Activated B cell treated with CpG ODN at 0.5 μM for 24 hours (primary cell): ENCODE measurements at regions of chr2 and their contacts with region 1.

Region 1: DNA sequence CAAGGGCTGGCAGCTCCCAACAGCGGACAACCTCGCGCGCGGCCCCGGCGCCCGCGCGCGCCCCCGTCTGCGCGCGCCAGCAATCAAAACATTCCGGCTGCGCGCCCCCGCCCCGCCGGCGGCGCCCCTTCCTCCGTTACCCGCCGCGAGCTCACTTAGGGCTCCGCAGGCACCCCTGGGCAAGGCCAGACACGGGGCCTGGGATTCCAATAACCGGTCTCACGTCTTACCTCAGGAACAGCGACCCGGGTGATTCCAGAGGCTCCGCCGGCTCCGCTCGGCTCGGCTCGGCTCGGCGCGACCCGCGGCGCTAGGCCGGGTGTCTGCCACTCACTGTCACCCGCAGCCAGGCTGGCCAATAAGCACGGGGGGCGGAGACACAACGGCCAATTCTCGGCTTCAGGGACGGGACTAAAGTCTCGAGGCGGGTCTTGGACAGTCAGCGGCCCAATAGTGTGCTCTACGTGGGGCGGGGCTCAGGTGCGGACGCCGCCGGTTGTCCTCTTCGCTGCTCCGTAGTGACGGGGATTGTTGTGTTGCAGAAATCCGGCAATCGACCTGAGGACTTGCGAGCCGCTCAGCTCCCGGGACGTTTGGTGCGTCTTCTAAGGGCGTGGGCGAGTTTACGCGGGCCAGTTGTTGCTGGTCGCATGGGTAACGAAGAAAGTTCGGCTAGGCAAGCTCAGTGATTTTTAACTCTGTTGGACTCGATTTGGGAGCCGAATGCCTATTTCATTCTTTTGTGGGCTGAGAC is at the starts of genes ANKZF1 and ATG9A:
- DNase-seq: peak; percentile 90
- ATAC-seq: peak; percentile 97
- H3K4me3 Mint-ChIP-seq: peak within 1 kb of the TSS; percentile 96
- H3K27ac Mint-ChIP-seq: peak within 1 kb of the TSS; percentile 95
- H3K4me1 Mint-ChIP-seq: peaks cover 43% of the 10 kb centered on the region
- H3K27me3 Mint-ChIP-seq: no peaks in the 10 kb centered on the region
- CTCF ChIP-seq: no peak
- total RNA-seq, gene ANKZF1: 96.0 and 105 TPM in 2 replicates
- total RNA-seq, gene ATG9A: 28.3 and 38.3 TPM in 2 replicates

Region 2: DNA sequence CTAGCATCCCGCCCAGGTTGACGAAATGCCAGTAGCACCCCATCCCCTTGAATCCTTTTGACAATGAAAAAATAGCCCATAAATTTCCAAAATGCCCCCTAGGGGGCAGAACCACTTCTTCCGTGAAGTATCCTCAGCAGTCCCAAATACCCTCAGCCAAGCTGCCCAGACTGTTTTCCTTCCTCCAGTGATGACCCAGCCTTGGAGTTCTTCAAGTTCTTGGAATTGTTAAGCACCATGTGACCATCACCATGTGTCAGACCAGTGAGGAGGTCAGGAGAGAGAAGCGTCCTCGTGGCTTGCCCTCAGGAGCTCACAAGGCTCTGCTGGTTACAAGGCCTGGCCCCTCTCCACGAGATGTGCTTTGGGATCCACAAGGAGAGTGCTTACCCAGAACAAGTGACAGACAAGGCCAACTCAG is 58.2 kb before region 1 on chr2:
- CTCF ChIA-PET with region 1: interaction called, 3 read pairs
- POLR2A ChIA-PET with region 1: interaction called, 32 read pairs
- intact Hi-C with region 1: no loop called
- DNase-seq: no peak
- ATAC-seq: peak; percentile 40
- H3K4me3 Mint-ChIP-seq: no peak overlapping the region
- H3K27ac Mint-ChIP-seq: no peak overlapping the region
- H3K4me1 Mint-ChIP-seq: peaks cover 21% of the 10 kb centered on the region
- H3K27me3 Mint-ChIP-seq: no peaks in the 10 kb centered on the region
- CTCF ChIP-seq: no peak

Region 3: DNA sequence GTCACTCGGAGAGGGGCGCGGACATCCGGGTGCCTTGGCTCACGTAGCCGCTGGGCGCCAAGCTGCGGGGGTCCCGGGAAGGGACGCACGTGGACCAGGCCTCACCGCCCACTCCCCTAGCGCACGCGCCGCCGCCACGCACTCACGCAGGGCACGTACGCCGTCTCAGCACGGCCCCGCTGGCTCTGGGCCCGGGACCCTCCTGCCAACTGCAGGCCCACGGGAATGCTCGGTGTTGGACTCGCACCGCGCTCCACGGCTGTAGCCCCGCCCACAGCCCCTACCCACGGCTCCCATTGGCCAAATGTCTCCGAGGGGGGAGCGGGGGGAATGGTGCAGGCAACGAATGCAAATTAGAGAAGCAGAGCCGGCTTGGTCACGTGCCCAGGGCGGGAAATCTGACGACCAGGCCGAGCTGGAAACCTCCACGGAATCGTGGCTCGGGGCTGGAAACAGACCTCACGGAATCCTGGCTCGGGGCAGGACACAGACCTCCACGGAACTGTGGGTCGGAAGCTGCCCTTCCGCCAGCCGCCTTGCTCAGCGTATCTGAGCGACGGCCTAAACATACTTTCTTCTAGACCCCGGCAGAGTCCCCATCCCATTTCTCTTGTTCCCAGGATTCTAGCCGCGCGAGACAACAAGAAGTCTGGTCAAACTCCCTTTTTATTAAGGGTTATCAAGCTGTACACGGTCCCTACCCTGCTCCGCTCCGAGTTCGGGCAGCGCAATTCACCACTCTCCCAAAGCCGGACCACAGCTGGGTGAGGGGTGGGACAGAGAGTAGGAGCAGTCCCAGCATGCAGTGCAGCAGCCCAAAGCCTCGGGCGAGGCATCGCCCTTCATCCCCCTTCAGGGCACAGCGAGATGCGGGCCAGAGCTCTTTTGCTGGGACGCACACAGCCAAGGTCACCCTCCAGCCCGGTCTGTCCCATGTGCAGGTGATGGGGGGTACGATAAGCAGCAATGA is 10.5 kb before region 1 on chr2 and contains the start of gene ABCB6:
- CTCF ChIA-PET with region 1: no interaction called
- POLR2A ChIA-PET with region 1: interaction called, 44 read pairs
- intact Hi-C with region 1: loop called (anchors 1 kb)
- DNase-seq: peak; percentile 82
- ATAC-seq: peak; percentile 95
- H3K4me3 Mint-ChIP-seq: peak within 1 kb of the TSS; percentile 81
- H3K27ac Mint-ChIP-seq: peak within 1 kb of the TSS; percentile 74
- H3K4me1 Mint-ChIP-seq: peaks cover 19% of the 10 kb centered on the region
- H3K27me3 Mint-ChIP-seq: no peaks in the 10 kb centered on the region
- CTCF ChIP-seq: no peak
- total RNA-seq, gene ABCB6: 12.1 and 16.6 TPM in 2 replicates

Region 4: DNA sequence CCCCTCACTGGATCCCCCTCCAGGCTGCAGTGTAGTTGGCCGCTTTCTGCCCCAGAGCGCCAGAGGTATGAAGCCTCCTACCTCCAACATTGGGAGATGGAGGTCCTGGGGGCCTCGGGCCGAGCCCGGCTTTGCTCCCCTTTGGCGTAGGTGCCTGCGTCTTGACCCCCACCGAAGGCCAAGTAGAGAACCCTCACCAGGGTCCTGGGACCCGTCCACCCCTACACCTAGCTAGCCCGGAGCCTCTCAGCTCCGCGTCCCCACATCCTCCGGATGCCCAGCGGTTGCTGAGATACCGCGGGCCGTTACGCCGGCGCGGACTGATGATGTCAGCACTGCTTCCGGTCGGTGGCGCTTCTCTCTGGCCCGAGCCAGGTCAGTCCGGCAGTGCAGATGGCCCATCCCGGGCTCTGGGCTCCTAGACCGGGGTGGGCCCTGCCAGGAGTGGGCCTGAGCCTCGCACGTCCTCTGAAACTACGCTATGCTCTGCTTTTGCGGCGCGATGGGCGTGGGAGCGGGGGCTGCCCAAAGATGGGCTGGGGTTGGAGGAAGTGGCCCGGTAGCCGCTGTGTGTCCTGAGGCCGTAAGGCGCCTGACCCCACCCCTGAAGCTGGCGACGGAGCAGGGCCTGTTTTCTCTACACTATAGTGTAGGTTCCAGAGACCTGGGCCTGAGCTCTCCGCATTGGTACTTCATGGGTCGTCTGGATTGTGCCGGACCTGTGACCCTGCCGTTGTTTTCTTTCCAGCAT is 15.8 kb after region 1 on chr2 and contains the starts of genes GLB1L and STK16:
- CTCF ChIA-PET with region 1: interaction called, 4 read pairs
- POLR2A ChIA-PET with region 1: interaction called, 287 read pairs
- intact Hi-C with region 1: loop called (anchors 1 kb)
- DNase-seq: peak; percentile 95
- ATAC-seq: peak; percentile 64
- H3K4me3 Mint-ChIP-seq: peak within 1 kb of the TSS; percentile 90
- H3K27ac Mint-ChIP-seq: peak within 1 kb of the TSS; percentile 98
- H3K4me1 Mint-ChIP-seq: peaks cover 57% of the 10 kb centered on the region
- H3K27me3 Mint-ChIP-seq: no peaks in the 10 kb centered on the region
- CTCF ChIP-seq: no peak
- total RNA-seq, gene GLB1L: 4.5 and 4.6 TPM in 2 replicates
- total RNA-seq, gene STK16: 31.0 and 36.5 TPM in 2 replicates

Region 5: DNA sequence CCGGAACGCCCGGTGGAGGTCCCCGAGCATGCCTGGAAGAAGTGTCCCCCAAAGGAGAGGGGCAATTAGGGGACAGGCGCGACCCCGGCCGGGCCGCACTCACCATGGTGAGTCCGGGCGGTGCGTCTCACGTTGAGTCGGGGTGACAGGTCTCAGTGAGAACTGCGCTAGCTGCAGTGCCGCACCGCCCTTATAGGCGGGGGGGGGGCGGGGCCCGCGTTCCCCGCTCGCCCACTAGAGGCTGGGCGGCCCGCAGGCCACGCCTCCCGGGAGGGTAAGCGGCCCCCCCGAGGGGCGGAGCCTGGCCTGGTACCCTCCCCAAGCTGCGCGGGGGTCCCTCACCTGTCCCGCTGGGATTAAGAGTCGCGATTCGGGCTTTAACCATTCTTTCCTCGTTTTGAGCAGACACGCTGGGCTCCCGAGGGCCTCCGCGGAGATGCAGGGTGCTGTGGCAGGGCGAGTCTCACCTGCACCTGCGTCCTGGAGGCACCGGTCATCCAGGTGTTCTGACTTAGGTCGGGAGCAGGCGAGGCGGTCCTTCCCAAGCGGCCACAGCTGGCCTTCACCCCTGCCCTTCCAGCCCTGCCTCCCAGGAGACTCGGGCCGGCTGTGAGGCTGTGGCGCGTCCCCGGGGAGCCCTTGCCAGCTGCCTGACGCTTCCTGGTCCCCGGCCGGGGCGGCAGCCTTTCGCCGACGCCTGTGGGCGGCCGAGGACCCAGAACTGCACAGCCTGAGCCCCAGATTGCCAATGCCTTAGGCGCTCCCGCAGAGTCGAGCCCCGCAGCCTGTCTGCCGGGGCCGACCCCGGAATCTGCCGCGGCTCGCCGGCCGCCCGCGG is 24.5 kb after region 1 on chr2 and contains the start of gene TUBA4A:
- CTCF ChIA-PET with region 1: interaction called, 7 read pairs
- POLR2A ChIA-PET with region 1: interaction called, 287 read pairs
- intact Hi-C with region 1: loop called (anchors 1 kb)
- DNase-seq: peak; percentile 90
- ATAC-seq: peak; percentile 69
- H3K4me3 Mint-ChIP-seq: peak within 1 kb of the TSS; percentile 82
- H3K27ac Mint-ChIP-seq: peak within 1 kb of the TSS; percentile 98
- H3K4me1 Mint-ChIP-seq: peaks cover 53% of the 10 kb centered on the region
- H3K27me3 Mint-ChIP-seq: no peaks in the 10 kb centered on the region
- CTCF ChIP-seq: no peak
- total RNA-seq, gene TUBA4A: 184 and 192 TPM in 2 replicates